ENCODE measurements at regions of chr2 and their contacts with region 1.

Region 1: GRCh38 chr2:58629545-58630119 is 388.5 kb upstream of the FANCL start:
- DNase-seq: no peak
- ATAC-seq: no peak

Region 2: DNA sequence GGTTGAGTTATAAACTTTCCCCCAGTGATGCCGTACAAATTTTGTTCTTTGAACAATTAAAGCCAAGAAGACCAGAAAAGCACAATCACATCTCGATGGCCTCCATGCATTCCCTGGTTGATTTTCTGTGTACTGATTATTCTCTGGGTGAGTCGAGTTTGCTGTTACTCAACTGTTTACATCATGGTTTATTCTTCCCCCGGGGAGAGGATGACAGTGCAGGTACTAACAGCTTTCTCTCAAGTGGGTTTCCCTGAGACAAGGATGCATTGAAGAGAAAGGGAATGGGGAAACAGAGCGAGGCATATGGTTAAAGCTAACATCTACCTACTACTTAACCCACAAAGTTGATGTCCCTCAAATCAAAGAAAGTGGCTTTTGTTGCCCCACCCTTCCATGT is 22.3 kb after region 1 on chr2:
- intact Hi-C with region 1: loop called (anchors 2 kb)
- DNase-seq: no peak
- ATAC-seq: no peak